Sigmoid colon (tissue), 7 donors: ENCODE measurements at regions of chr5 and their contacts with region 1.

Region 1: GRCh38 chr5:126676195-126676624 is 75.5 kb downstream of the PHAX start:
- DNase-seq: peak; percentile 70
- H3K4me3 ChIP-seq: no peak overlapping the region
- H3K27ac ChIP-seq: no peak overlapping the region
- H3K4me1 ChIP-seq: no peaks in the 10 kb centered on the region
- H3K27me3 ChIP-seq: peaks cover 0 to 3% (median 0%) of the 10 kb centered on the region in 3 donors
- CTCF ChIP-seq: peak; percentile 65 to 81 (median 71)
- EP300 ChIP-seq: no peak
- POLR2A ChIP-seq: no peak

Region 2: DNA sequence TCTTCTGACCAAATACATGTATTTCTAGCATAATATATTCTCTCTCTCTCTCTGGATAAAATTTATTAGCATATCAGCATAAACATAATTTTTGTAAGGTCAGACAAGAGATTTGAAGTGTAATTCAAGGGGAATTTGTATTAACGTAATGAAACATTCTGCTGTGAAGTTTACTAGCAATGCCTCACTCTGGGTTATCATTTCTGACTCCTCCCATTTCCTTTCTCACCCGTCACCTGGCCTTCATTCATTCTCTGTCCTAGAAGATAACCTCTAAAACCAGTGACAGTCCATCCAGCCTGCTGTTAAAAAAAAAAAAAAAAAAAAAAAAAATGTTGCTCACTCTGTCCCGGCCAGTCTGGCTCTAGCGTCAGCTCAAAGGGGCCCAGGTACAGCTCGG is 225.9 kb before region 1 on chr5:
- intact Hi-C with region 1: no loop called
- DNase-seq: no peak
- H3K4me3 ChIP-seq: no peak overlapping the region
- H3K27ac ChIP-seq: peak overlapping the region in 3 of 4 donors; percentile 37 to 62 (median 61)
- H3K4me1 ChIP-seq: peaks cover 0 to 51% (median 31%) of the 10 kb centered on the region in 4 donors
- H3K27me3 ChIP-seq: no peaks in the 10 kb centered on the region
- CTCF ChIP-seq: no peak
- EP300 ChIP-seq: no peak
- POLR2A ChIP-seq: no peak

Region 3: GRCh38 chr5:126776497-126777256 is 100.5 kb after region 1 on chr5 and contains the start of gene LMNB1:
- intact Hi-C with region 1: loop called (anchors 1 kb)
- DNase-seq: peak; percentile 97
- H3K4me3 ChIP-seq: peak within 1 kb of the TSS; percentile 54 to 77 (median 68)
- H3K27ac ChIP-seq: peak within 1 kb of the TSS; percentile 86 to 93 (median 90)
- H3K4me1 ChIP-seq: peaks cover 0 to 20% (median 11%) of the 10 kb centered on the region in 4 donors
- H3K27me3 ChIP-seq: no peaks in the 10 kb centered on the region
- CTCF ChIP-seq: no peak
- EP300 ChIP-seq: no peak
- POLR2A ChIP-seq: no peak
- total RNA-seq, gene LMNB1: 1.5 to 14.8 (median 5.8) TPM

Region 4: DNA sequence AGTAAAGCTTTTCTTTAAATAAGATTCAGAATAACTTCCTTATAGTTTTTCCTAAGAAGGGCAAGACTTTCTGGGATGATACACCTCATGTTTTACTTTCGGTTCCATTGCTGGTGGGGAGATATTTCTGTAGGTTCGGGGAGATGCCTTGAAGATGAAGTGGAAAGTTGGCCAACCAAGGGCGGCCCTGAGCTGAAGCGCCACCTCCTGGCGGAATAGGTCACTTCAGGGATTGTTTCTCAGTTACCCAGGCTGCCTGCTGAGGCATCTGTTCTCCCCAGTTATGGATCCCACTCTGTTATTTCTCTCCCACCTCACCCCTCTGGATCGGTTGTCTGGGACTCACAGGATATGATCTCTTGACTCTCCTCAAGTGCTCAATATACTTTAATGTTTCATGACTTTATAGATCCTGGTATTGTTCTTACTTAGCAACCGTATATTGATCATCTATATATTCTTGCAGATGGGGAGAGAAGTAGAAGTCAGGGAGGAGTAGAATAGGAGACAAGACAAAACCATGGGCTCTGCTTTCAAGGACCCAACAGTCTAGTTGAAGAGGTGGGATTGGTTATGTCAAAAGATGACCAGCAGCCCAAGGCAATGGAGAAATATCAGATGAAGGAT is 637.8 kb after region 1 on chr5:
- intact Hi-C with region 1: loop called (anchors 10 kb)
- DNase-seq: peak; percentile 68
- H3K4me3 ChIP-seq: no peak overlapping the region
- H3K27ac ChIP-seq: no peak overlapping the region
- H3K4me1 ChIP-seq: peaks cover 0 to 6% (median 0%) of the 10 kb centered on the region in 4 donors
- H3K27me3 ChIP-seq: no peaks in the 10 kb centered on the region
- CTCF ChIP-seq: peak in 3 of 4 experiments; percentile 33 to 60 (median 43)
- EP300 ChIP-seq: no peak
- POLR2A ChIP-seq: no peak